Heart right ventricle (tissue), 16 donors: ENCODE measurements at regions of chr9 and their contacts with region 1.

Region 1: DNA sequence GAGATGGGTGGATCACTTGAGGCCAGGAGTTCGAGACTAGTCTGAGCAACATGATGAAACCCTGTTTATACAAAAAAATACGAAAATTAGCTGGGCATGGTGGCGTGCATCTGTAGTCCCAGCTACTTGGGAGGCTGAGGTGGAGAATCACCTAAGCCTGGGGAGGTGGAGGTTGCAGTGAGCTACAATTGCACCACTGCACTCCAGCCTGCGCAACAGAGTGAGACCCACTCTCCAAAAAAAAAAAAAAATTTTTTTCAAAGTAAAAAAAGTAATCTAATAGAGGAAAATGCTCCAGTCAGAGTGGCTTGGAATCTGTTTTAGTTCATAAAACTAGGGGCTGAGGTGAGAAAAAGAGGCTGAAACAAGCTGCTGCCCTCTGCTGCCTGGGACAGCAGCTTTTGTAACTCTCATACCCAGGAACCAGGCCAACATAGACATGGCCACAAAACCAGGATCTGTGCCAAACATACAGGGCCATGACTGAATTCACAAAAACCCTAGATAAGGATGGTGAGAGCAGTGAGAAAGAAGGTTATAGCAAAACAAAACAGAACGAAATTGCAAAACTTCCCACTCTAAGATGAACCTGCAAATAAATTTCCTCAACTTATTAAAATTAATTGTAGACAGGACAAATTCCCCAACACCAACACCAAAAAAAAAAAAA is 13.1 kb upstream of the DCAF12 start:
- DNase-seq: peak in 1 of 2 donors; percentile 77
- ATAC-seq: peak; percentile 88 to 99 (median 93)
- H3K4me3 ChIP-seq: no peak overlapping the region
- H3K27ac ChIP-seq: peak overlapping the region in 5 of 10 donors; percentile 7 to 43 (median 22)
- H3K4me1 ChIP-seq: peaks cover 0 to 19% (median 10%) of the 10 kb centered on the region in 9 donors
- H3K27me3 ChIP-seq: no peaks in the 10 kb centered on the region
- CTCF ChIP-seq: peak in 6 of 9 donors; percentile 26 to 66 (median 49)

Region 2: DNA sequence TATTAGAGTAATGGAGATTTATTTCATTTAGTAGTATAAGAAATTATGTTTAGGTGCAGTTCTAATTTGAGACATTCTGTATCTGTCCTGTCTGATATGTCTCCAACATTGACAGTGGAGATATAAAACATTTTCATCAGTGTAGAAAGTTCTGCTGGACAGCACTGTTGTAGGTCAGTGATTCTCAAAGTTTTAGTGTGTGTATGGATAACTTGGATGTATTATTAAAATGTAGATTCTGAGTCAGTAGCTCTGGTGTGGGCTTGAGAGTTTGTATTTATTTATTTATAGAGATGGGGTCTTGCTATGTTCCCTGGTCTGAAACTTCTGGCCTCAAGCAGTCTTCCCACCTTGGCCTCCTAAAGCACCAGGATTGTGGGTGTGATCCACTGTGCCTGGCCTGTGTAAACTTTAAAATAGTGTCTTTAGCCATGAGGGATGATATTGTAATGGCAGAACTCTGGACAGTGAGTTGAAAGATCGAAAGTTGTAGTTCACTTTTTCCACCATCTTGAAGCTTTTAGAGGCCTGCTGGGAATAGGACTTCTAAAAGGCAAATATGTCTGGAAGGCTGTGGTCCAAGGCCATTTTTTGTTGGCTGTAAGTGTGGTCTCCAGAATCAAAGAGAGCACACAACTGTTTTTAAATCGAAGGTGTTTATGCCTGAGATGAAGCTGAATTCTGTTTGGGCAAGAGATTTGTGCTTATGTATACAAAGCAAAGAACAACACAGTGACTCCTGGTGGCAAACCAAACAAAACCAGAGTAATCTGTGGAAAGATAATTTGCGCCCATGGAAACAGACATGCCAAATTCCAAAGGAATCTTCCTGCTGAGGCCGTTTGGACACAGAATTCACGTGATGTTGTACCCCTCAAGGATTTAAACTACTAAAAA is 51.6 kb after region 1 on chr9:
- intact Hi-C with region 1: loop called in 1 of 10 experiments (anchors 10 kb)
- DNase-seq: no peak
- ATAC-seq: peak in 1 of 8 donors; percentile 12
- H3K4me3 ChIP-seq: no peak overlapping the region
- H3K27ac ChIP-seq: peak overlapping the region in 2 of 10 donors; percentile 2 to 35
- H3K4me1 ChIP-seq: peaks cover 0 to 78% (median 49%) of the 10 kb centered on the region in 9 donors
- H3K27me3 ChIP-seq: no peaks in the 10 kb centered on the region
- CTCF ChIP-seq: peak in 5 of 9 donors; percentile 11 to 45 (median 33)

Region 3: GRCh38 chr9:34203275-34203991 is 63.8 kb after region 1 on chr9:
- intact Hi-C with region 1: loop called in 2 of 10 experiments (anchors 10 kb)
- DNase-seq: no peak
- ATAC-seq: no peak
- H3K4me3 ChIP-seq: no peak overlapping the region
- H3K27ac ChIP-seq: peak overlapping the region in 3 of 10 donors; percentile 6 to 28 (median 13)
- H3K4me1 ChIP-seq: peaks cover 3 to 63% (median 33%) of the 10 kb centered on the region in 9 donors
- H3K27me3 ChIP-seq: no peaks in the 10 kb centered on the region
- CTCF ChIP-seq: no peak

Region 4: DNA sequence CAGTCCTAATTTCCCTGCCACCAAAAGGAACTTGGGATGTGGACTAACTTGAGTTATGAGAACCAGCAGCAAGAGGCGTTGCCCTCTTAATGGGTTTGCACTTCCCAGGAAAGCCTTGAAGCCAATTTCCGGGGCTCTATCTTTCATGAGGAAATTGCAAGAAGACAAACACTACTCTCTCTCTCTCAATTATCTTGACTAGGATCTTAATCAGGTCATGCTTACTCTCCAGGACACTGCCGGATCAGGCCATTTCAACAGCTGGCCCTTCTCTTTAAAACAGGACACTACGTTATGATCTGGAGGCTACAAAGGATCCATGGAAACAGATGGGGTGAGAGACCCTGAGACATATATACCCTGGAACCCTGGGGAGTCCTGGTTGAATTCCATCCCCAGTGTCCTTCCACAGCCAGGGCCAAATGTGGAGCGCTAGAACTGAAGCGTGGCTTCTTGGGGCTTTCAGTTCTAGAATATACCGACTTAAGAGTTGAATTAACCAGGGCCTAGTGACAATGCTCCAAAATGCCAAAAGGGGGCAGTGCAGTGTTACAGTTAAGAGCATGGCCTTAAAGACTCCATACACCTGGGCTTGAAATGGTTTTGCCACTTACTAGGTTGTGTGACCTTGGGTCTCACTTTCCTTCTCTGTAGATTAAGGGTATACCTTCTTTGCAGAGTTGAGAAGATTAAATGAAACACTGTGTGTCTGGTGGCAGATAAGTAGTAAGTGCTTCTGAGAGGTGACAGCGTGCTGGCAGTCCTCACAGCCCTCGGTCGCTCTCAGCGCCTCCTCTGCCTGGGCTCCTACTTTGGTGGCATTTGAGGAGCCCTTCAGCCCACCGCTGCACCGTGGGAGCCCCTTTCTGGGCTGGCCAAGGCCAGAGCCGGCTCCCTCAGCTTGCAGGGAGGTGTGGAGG is 297.7 kb after region 1 on chr9:
- intact Hi-C with region 1: no loop called
- DNase-seq: peak in 1 of 2 donors; percentile 57
- ATAC-seq: peak; percentile 75 to 86 (median 80)
- H3K4me3 ChIP-seq: no peak overlapping the region
- H3K27ac ChIP-seq: no peak overlapping the region
- H3K4me1 ChIP-seq: peaks cover 5 to 50% (median 32%) of the 10 kb centered on the region in 9 donors
- H3K27me3 ChIP-seq: no peaks in the 10 kb centered on the region
- CTCF ChIP-seq: peak; percentile 53 to 86 (median 78)